CD4-positive, alpha-beta memory T cell (primary cell): ENCODE measurements at regions of chr16 and their contacts with region 1.

Region 1: GRCh38 chr16:71610936-71611871 is 14.8 kb upstream of the MARVELD3 start:
- DNase-seq: peak; percentile 63 to 67 (median 66)
- H3K4me3 ChIP-seq: no peak overlapping the region
- H3K4me3 Mint-ChIP-seq: peak overlapping the region in 2 of 8 donors; percentile 13 to 25
- H3K27ac ChIP-seq: no peak overlapping the region
- H3K27ac Mint-ChIP-seq: no peak overlapping the region
- H3K4me1 ChIP-seq: no peaks in the 10 kb centered on the region
- H3K4me1 Mint-ChIP-seq: peaks cover 0 to 4% (median 2%) of the 10 kb centered on the region in 4 donors
- H3K27me3 ChIP-seq: no peaks in the 10 kb centered on the region
- H3K27me3 Mint-ChIP-seq: peaks cover 2 to 25% of the 10 kb centered on the region in 2 donors

Region 2: GRCh38 chr16:71499775-71500364 is 111.3 kb before region 1 on chr16:
- CTCF ChIA-PET with region 1: interaction called, 17 read pairs
- POLR2A ChIA-PET with region 1: no interaction called
- intact Hi-C with region 1: no loop called
- DNase-seq: peak; percentile 50 to 64 (median 56)
- H3K4me3 ChIP-seq: no peak overlapping the region
- H3K4me3 Mint-ChIP-seq: no peak overlapping the region
- H3K27ac ChIP-seq: no peak overlapping the region
- H3K27ac Mint-ChIP-seq: no peak overlapping the region
- H3K4me1 ChIP-seq: no peaks in the 10 kb centered on the region
- H3K4me1 Mint-ChIP-seq: no peaks in the 10 kb centered on the region
- H3K27me3 ChIP-seq: no peaks in the 10 kb centered on the region
- H3K27me3 Mint-ChIP-seq: peaks cover 7 to 11% of the 10 kb centered on the region in 2 donors

Region 3: DNA sequence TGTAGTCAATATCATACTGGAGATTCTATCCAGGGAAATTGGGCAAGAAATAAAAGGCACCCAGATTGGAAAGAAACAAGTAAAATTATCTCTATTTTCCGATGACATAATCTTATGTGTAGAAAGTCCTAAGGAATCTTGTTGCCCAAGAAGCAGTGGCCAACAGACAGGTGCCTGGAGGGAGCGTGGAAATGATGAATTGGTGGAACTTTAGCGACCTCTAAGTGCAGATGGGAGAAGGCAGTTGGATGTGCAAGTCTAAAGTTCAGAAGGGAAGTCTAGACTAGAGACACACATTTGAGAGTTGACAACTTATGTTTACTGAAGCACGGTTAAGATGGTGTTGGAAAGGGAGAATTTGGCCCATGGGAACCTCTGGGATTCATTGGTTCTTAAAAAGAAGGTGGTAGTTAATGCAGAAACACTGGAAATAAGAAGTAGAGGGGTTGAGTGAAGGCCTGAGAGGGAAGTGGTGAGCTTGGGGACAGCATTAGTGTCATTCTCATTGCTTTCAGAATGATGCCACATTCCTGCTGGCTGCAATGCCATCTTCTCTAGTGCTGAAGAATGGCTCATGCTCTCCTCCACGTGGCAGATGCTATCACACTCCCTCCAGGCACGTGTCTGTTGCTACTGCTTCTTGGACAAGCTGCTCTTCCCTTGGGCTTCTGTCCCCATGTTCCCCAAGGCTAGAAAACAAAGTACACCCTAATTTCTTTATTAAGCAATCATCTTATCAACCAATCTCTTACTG is 58.3 kb before region 1 on chr16:
- CTCF ChIA-PET with region 1: interaction called, 15 read pairs
- POLR2A ChIA-PET with region 1: no interaction called
- intact Hi-C with region 1: no loop called
- DNase-seq: no peak
- H3K4me3 ChIP-seq: no peak overlapping the region
- H3K4me3 Mint-ChIP-seq: no peak overlapping the region
- H3K27ac ChIP-seq: no peak overlapping the region
- H3K27ac Mint-ChIP-seq: no peak overlapping the region
- H3K4me1 ChIP-seq: no peaks in the 10 kb centered on the region
- H3K4me1 Mint-ChIP-seq: peaks cover 0 to 1% (median 0%) of the 10 kb centered on the region in 4 donors
- H3K27me3 ChIP-seq: no peaks in the 10 kb centered on the region
- H3K27me3 Mint-ChIP-seq: peaks cover 5 to 10% of the 10 kb centered on the region in 2 donors

Region 4: DNA sequence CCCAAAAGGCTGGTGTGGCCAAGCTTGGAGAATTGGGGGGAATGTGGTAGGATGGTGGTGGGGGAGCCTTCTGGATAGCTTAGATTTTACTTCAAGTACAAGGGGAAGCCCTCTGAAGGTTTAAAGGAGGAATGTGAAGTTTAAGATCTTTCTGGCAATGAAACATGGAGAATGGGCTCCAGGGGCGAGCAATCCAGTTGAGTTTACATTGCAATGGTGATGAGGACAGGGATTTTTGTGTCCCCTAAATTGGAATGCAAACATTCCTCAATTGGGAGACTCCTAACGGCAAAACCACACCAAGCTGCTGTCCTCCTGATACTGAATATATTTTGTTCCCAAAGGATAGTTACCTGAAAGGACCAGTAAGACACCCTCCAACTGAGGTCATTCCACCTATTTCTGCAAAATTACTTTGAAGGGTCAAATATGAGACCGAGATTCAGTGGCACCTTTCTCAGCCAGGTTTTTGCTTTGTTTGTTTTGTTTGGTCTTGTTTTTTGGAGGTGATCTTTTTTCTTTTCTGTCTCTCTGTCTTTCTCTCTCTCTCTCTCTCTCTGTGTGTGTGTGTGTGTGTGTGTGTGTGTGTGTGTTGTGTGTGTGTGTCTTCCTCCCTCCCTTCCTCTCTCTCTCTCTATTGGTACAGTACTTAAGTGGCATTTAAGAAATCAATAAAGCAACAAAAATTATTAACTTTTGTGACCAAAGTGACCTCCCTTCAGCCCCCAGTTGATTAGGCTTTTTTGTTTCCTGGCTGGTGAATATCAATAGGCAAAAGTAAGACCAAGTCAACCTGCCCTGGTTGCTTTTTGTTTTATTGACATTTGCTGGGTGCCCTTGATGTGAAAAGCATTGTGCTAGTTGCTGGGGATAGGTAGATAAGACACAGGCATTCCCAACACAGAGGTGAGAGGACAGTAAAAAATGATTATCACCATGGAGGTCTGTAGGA is 17.9 kb before region 1 on chr16:
- CTCF ChIA-PET with region 1: interaction called, 12 read pairs
- POLR2A ChIA-PET with region 1: no interaction called
- intact Hi-C with region 1: no loop called
- DNase-seq: no peak
- H3K4me3 ChIP-seq: no peak overlapping the region
- H3K4me3 Mint-ChIP-seq: no peak overlapping the region
- H3K27ac ChIP-seq: no peak overlapping the region
- H3K27ac Mint-ChIP-seq: no peak overlapping the region
- H3K4me1 ChIP-seq: no peaks in the 10 kb centered on the region
- H3K4me1 Mint-ChIP-seq: no peaks in the 10 kb centered on the region
- H3K27me3 ChIP-seq: no peaks in the 10 kb centered on the region
- H3K27me3 Mint-ChIP-seq: peaks cover 25 to 49% of the 10 kb centered on the region in 2 donors

Region 5: GRCh38 chr16:71746442-71747046 is 135.3 kb after region 1 on chr16:
- CTCF ChIA-PET with region 1: interaction called, 6 read pairs
- POLR2A ChIA-PET with region 1: no interaction called
- intact Hi-C with region 1: loop called (anchors 1 kb)
- DNase-seq: peak; percentile 36 to 50 (median 40)
- H3K4me3 ChIP-seq: no peak overlapping the region
- H3K4me3 Mint-ChIP-seq: no peak overlapping the region
- H3K27ac ChIP-seq: no peak overlapping the region
- H3K27ac Mint-ChIP-seq: peak overlapping the region in 3 of 7 donors; percentile 1 to 44 (median 15)
- H3K4me1 ChIP-seq: no peaks in the 10 kb centered on the region
- H3K4me1 Mint-ChIP-seq: peaks cover 0 to 6% (median 2%) of the 10 kb centered on the region in 4 donors
- H3K27me3 ChIP-seq: no peaks in the 10 kb centered on the region
- H3K27me3 Mint-ChIP-seq: no peaks in the 10 kb centered on the region